HepG2 (cell line): ENCODE measurements at regions of chr4 and their contacts with region 1.

Region 1: DNA sequence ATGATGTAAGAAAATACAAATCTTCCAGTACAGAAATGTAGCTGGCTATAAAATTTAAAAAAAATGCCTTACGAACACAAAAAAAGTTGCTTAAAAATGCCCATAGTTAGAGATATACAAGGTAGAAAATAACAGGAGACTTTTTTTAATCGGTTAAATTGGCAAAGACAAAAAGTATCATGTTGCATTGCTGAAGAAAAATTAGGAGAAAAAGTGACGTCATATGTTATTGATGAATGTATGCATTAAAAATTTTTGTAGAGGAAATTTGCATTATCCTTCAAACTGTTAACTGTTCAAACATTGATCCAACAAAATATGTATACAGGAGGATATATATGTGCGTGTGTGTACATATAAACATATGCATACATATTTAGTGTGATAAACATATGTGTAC is 1634.4 kb upstream of the PCDH7 start:
- DNase-seq: no peak
- ATAC-seq: no peak
- H3K4me3 ChIP-seq: no peak overlapping the region
- H3K27ac ChIP-seq: no peak overlapping the region
- H3K4me1 ChIP-seq: no peaks in the 10 kb centered on the region
- H3K27me3 ChIP-seq: no peaks in the 10 kb centered on the region
- CTCF ChIP-seq: no peak
- EP300 ChIP-seq: no peak
- POLR2A ChIP-seq: no peak
- RAD21 ChIP-seq: no peak

Region 2: DNA sequence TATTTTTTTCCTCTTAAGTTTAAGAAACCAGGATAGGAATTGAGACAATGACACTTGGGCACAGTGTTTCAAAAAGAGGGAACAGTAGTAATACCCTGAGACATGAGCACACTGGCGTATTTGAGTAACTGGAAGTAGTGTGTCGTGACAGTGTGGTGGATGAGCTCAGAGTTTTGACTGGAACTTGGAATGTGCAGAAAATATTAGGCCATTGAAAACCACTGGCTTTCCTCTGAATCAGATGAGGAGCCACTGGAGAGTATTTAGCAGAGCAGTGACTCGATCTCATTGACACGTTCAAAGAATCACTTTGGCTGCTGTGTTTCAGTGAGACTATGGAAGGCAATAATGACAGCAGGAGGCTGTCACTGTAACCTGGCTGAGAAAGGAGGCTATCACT is 693.9 kb before region 1 on chr4:
- CTCF ChIA-PET with region 1: no interaction called
- POLR2A ChIA-PET with region 1: no interaction called
- in situ Hi-C with region 1: no loop called
- intact Hi-C with region 1: loop called (anchors 5 kb)
- DNase-seq: no peak
- ATAC-seq: no peak
- H3K4me3 ChIP-seq: no peak overlapping the region
- H3K27ac ChIP-seq: no peak overlapping the region
- H3K4me1 ChIP-seq: no peaks in the 10 kb centered on the region
- H3K27me3 ChIP-seq: no peaks in the 10 kb centered on the region
- CTCF ChIP-seq: no peak
- EP300 ChIP-seq: no peak
- POLR2A ChIP-seq: no peak
- RAD21 ChIP-seq: no peak